HAP-1 (cell line): ENCODE measurements at regions of chr2 and their contacts with region 1.

Region 1: DNA sequence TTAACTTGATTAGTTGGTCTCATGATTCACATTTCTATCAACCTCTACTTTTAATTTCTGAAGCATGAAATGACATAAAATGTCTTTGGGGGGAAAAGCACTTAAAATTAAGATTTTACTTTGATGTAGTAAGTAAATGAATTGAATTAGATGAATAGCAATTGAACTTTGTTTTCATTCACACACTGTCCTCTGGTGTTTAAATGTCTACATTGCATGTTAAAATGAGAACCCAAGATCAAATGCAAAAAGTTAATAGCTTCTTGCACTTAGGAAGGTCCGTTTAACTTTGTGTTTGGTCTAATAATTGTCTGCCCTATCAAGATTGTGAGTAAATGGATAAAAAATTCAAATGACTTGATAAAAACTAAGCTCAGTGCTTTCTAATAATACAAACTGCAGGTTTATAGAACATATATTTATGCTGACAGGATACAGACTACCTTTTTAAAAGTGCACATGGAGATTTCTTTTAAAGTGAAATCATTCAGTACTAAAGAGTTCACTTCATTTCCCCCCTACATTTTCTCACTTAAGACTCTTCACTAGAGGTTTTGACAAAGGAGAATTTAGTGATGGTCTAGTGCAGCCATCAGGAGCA is 156.2 kb upstream of the NABP1 start:
- DNase-seq: peak in 1 of 2 experiments; percentile 45
- H3K4me3 ChIP-seq: no peak overlapping the region
- H3K4me1 ChIP-seq: no peaks in the 10 kb centered on the region
- H3K27me3 ChIP-seq: peaks cover 11% of the 10 kb centered on the region

Region 2: DNA sequence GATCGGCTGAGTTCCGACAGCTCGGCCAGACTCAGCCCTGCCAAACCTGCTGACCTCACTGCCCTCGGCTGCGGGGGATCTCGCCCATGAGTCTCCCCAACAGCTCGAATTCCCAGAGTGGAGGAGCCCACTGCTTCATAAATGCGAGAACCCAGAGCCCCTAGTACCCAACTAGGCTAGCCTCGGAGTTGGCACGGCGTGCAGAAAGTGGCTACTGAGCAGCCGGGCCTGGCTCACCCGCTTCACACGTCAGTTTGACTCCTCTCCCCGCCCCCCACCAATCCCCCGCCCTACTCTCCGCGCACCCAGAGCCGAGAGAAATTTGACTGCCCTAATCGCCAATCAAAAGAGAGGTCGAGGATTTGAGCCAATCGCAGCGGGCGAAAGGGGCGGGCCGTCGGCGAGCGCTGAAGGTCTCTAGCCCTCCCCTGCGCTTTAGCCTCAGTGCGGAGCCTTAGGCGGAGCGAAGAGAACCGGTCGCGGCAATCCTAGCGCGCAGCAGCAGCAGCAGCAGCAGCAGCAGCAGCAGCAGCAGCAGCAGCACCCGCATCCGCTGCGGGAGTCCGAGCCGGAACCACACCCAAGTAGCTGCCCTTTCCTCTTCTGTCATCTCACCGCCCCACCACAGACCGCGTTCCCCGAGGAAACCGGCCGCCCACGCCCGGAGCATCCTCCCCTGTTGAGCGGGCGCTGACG is 641.2 kb before region 1 on chr2 and contains the start of gene GLS:
- in situ Hi-C with region 1: no loop called
- DNase-seq: peak; percentile 97
- H3K4me3 ChIP-seq: peak within 1 kb of the TSS; percentile 66
- H3K4me1 ChIP-seq: peaks cover 20% of the 10 kb centered on the region
- H3K27me3 ChIP-seq: no peaks in the 10 kb centered on the region

Region 3: DNA sequence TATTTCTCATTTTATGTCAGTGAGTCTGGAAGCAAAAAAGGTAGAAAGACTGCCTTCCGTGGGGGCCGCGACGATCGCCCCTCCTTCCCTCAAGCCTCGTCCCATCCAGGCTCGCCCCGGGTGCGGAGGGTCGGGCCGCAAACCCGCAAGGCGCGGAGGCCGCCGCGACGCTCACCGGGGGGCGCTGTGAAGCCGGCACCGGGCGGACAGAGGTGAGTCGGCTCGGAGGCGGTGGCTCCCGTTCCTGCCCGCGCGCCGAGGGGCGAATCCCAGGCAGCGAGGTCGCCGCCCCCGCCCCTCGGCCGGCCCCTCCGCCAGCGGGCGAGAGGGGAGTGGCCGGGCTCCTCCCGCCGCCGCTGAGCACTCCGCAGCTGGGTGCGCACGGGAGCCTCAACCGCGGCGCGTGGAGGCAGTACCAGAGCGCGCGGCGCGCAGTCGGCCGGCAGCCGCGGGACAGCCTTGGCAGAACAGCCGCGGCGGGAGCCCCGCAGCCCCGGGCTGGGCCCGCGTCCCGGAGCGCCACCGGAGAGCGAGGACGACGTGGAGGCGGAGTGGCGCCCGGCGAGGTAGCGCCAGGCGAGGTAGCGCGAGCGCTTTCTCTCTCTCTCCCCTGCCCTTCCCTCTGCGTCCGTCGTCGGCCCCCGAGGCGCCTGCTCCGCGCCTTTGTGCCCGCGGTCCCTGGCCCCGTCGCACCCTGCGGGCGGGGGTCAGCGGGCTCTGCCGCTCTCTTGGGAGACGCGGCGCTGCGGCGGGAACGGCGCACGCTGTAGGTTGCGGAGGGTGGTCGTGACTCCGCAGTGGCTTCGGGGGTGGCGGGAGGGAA is 276.5 kb before region 1 on chr2 and contains the start of gene MYO1B:
- in situ Hi-C with region 1: loop called (anchors 25 kb)
- DNase-seq: peak; percentile 74 to 89
- H3K4me3 ChIP-seq: peak within 1 kb of the TSS; percentile 57
- H3K4me1 ChIP-seq: 0 out of 2 replicates have a peak, but pooled peaks cover 7% of the 10 kb centered on the region
- H3K27me3 ChIP-seq: no peaks in the 10 kb centered on the region

Region 4: GRCh38 chr2:191970867-191971266 is 449.2 kb after region 1 on chr2:
- in situ Hi-C with region 1: no loop called
- DNase-seq: no peak
- H3K4me3 ChIP-seq: no peak overlapping the region
- H3K4me1 ChIP-seq: no peaks in the 10 kb centered on the region
- H3K27me3 ChIP-seq: no peaks in the 10 kb centered on the region

Region 5: DNA sequence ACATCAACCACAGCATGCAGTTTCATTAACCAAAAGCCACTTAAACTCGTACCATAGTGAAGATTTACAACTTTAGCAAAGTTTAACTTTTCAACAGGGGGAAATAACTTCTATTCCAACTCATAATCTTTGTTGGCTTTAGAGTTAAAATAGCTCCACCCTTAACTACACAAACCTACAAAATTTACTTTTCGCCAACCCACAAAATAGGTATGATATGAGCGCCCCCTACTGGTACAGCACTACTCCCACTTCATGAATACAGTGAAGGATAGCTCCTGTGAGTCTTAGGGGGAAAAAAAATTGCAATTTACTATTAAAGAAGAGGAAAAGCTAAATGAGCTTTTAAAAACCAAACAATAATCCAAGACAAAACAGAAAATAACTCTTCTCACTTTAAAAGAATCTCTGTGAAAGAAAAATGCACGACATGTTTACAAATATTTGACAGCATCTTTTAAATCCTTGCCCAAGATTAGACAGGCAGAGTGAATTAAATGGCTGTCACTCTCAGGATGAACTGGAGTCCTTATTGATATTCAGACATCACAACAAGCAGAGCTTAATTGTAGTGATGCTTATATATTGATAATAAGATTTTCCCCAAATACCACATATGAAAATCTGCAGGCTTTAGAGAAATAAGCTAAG is 640.8 kb after region 1 on chr2:
- in situ Hi-C with region 1: no loop called
- DNase-seq: peak; percentile 66 to 87
- H3K4me3 ChIP-seq: no peak overlapping the region
- H3K4me1 ChIP-seq: no peaks in the 10 kb centered on the region
- H3K27me3 ChIP-seq: no peaks in the 10 kb centered on the region